Psoas muscle (tissue), 8 donors: ENCODE measurements at regions of chr19 and their contacts with region 1.

Region 1: DNA sequence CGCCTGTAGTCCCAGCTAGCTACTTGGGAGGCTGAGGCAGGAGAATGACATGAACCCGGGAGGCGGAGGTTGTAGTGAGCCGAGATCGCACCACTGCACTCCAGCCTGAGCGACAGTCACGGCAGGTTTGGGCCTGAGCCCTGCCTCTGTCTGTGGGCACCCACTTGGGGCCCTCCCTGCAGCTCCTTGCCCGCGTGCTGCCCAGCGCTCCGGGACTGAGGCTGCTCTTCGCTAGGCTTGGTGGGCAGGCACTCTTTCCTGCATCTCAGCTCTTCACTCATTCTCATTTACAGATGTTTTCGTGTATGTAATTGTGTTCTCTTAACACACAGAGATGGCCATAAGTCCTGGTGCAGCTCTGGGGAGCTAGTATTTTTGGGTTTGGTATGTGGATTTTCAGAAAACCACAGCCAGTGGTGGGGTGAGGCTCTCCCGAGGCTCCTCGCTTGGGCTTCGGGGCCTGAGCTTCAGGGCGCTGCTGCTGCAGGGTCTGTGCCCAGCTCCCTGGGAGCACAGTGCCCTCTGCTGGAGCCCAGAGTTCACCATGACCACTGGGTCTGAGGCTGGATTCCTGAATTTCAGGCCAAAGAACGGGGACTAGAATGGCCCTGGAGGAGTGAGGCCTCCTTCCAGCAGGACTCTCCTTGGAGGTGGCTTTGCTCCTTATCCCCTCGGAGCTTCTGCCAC is 15.2 kb downstream of the UPF1 start:
- DNase-seq: peak; percentile 83 to 91
- ATAC-seq: peak; percentile 83 to 90 (median 86)
- H3K4me3 ChIP-seq: no peak overlapping the region
- H3K27ac ChIP-seq: no peak overlapping the region
- H3K4me1 ChIP-seq: peaks cover 60% of the 10 kb centered on the region
- H3K27me3 ChIP-seq: no peaks in the 10 kb centered on the region
- CTCF ChIP-seq: peak; percentile 85

Region 2: DNA sequence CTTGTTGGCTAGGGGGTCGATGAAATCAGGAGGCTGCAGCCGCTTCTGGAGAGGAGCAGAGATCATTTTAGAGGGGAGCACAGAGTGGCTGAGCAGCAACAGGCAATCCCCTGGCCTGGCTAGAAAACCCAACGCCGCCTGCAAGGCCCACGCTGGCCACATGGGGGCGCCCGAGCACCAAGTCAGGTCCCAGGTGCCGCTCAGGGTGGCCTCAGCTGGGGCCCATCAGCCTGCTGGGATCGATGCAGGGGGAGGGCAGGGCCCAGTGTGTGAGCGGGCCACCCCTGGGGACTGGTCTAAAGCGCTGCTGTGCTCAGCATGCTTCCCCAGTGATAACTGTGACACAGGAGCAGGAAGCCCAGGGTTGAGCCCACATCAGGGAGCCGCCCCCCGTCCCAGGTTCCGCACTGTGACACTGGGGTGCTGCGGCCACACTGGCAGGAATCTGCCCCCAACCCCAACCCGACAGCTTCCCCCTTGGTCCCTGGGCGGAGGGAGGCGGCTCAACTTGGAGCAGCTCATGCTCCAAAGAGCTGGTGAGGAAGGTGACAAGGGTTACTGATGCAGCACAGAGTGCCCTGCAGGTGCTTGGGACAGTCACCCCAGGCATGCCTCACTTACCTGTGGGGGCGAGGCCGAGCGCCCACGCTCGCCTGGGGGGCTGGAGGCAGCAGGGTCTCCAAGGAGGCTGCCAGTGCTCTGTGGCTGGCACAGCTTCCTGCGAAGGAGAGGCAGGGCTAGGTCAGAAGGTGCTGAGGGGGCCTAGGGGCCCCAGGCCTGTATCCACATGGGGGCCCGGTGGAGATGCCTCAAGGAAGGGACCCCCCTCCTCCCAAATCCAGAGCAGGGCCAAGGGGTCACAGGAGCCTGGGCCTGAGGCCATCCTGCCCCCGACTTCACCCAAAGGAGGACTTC is 395.8 kb before region 1 on chr19:
- intact Hi-C with region 1: loop called (anchors 5 to 10 kb)
- DNase-seq: peak; percentile 85 to 94
- ATAC-seq: peak; percentile 79 to 90 (median 84)
- H3K4me3 ChIP-seq: no peak overlapping the region
- H3K27ac ChIP-seq: peak overlapping the region; percentile 23
- H3K4me1 ChIP-seq: peaks cover 13% of the 10 kb centered on the region
- H3K27me3 ChIP-seq: no peaks in the 10 kb centered on the region
- CTCF ChIP-seq: peak; percentile 97

Region 3: DNA sequence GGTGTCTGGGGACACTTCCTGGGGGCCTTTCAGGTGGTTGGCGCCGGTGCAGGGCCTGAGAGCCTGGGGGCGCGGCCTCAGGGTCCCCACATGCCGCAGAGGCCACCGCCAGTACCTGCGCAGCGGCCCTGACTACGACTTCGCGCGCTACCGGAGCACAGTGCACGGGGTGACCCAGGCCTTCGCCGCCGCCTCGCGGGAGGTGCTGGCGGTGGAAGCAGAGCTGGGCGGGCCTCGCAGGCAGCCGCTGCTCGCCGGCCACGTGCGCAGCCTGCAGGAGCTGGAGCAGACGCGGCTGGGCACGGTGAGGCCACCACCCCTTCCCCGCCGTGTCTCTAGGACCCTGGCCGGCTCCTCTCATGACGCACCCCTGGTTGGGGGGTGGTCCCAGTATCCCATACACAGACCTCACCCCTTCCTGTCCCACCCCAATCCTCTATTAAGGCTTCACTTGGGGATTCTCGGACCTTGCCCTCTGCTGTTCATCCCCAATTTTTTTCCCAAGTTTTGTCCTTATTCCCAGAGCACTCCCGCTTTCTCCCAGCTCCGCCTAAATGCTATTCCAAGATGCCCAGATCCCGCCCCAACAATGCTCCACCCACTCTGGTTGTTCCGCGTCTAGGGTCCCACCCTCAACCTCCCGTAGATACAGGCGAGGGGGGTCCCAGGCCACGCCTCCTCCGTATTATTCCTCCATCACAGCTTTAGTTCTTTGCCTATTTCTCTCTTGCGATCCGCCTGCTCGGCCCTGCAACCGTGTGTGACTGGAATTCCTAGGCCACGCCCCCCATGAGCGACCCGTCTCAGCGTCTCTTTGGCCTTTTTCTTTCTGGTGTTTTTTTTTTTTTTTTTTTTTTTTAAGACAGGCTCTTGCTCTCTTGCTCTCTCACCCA is 257.4 kb before region 1 on chr19:
- intact Hi-C with region 1: loop called (anchors 2 kb)
- DNase-seq: peak; percentile 75 to 84
- ATAC-seq: peak; percentile 66 to 80 (median 73)
- H3K4me3 ChIP-seq: peak overlapping the region; percentile 78
- H3K27ac ChIP-seq: peak overlapping the region; percentile 87
- H3K4me1 ChIP-seq: peaks cover 12% of the 10 kb centered on the region
- H3K27me3 ChIP-seq: no peaks in the 10 kb centered on the region
- CTCF ChIP-seq: no peak

Region 4: GRCh38 chr19:18683213-18683939 is 163.6 kb before region 1 on chr19 and contains the start of gene CRTC1:
- intact Hi-C with region 1: loop called in 1 of 2 experiments (anchors 10 kb)
- DNase-seq: peak; percentile 88 to 96
- ATAC-seq: peak; percentile 85 to 92 (median 88)
- H3K4me3 ChIP-seq: peak within 1 kb of the TSS; percentile 71
- H3K27ac ChIP-seq: peak within 1 kb of the TSS; percentile 88
- H3K4me1 ChIP-seq: peaks cover 18% of the 10 kb centered on the region
- H3K27me3 ChIP-seq: no peaks in the 10 kb centered on the region
- CTCF ChIP-seq: no peak
- total RNA-seq, gene CRTC1: 8.1 to 12.5 (median 9.6) TPM